ENCODE measurements at regions of chr2 and their contacts with region 1.

Region 1: DNA sequence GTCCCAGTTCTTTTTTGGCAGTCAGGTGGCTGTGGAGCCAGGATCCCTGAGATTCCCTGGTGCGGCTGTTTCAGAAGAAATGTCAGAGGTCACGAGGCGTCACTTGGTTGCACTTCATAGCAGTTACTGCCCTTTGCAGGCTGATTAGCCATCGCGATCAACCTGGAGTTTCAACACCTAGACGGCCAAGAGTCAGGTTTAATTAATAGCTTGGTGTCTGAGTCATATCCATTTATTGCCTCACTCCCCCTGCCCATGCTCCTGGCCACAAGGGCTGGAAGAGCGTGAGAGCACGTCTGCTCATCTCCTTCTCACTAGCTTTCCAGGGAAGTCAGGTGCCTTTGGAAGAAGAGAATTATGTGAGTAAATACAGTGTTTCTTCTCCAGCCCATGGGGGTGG is 552.3 kb downstream of the TSN start:
- DNase-seq: no peak
- H3K4me3 ChIP-seq: no peak overlapping the region
- H3K27ac ChIP-seq: no peak overlapping the region
- H3K4me1 ChIP-seq: no peaks in the 10 kb centered on the region
- H3K27me3 ChIP-seq: no peaks in the 10 kb centered on the region
- CTCF ChIP-seq: no peak

Region 2: GRCh38 chr2:122205637-122206036 is 102.1 kb before region 1 on chr2:
- CTCF ChIA-PET with region 1: no interaction called
- dilution Hi-C with region 1: loop called (anchors 5 kb)
- in situ Hi-C with region 1: no loop called
- intact Hi-C with region 1: no loop called
- DNase-seq: no peak
- H3K4me3 ChIP-seq: no peak overlapping the region
- H3K27ac ChIP-seq: no peak overlapping the region
- H3K4me1 ChIP-seq: peaks cover 4% of the 10 kb centered on the region
- H3K27me3 ChIP-seq: no peaks in the 10 kb centered on the region
- CTCF ChIP-seq: no peak

Region 3: DNA sequence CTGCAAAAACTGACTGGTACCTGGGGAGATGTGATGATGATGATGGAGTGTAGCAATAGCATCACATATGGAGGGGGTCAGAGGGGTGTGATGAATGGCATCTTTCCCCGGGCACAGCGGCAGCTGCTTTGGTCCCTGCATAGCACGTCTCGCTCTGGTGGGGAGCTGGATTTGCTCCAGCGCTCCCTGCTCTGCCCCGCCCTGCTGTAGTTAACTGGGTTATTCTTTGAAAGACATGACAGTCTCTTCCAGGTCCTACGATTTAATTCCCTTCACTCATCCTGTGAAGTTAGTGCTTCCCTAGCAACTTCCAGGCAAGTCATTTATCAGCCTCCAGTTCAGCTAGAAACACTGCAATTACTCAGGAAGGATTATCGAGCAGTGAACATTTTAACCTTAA is 89.2 kb before region 1 on chr2:
- CTCF ChIA-PET with region 1: no interaction called
- dilution Hi-C with region 1: no loop called
- in situ Hi-C with region 1: no loop called
- intact Hi-C with region 1: no loop called
- DNase-seq: no peak
- H3K4me3 ChIP-seq: no peak overlapping the region
- H3K27ac ChIP-seq: no peak overlapping the region
- H3K4me1 ChIP-seq: no peaks in the 10 kb centered on the region
- H3K27me3 ChIP-seq: no peaks in the 10 kb centered on the region
- CTCF ChIP-seq: no peak